ENCODE measurements at regions of chr4 and their contacts with region 1.

Region 1: DNA sequence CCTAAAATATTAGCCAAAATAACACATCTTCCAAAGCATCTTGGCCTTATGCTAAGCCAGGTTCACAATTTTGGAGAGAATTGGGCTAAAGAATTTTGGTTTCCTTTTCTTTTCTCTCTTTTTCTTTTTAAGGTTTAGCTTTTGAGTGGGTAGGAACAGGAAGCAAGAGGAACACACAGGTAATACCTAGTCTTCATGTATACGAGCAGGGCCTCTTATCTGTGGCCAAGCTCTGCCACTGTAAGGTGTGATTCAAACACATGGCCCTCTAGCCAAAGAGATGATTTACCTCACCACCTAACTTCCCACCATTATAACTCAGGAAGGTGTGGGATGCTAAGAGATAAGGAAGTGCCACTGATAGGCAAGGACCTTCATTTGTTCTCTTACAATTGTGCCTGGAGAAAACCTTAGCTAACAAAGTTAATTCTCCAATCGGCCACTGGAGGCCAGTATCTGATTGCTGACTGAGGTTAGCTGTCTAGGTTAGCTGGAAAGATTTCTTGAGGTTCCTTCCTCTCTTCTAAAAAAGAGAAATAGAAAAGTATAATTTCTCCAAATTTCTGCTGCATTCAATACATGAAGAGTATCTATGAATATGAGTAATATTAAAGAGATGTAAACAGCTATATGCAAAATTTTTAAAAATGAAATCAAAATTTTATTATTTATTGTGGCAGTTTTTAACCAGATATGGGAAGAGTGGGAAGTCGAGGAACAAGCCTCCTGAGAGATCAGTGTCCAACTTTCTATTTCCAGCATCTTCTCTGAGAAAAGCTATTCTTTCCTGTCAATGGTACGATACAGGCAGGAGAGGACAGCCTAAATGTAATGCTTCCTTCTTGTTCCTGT is 30.1 kb upstream of the BBS7 start:
- DNase-seq: peak; percentile 55 to 75 (median 59)
- ATAC-seq: peak; percentile 95
- H3K4me3 ChIP-seq: no peak overlapping the region
- H3K27ac ChIP-seq: no peak overlapping the region
- H3K4me1 ChIP-seq: no peaks in the 10 kb centered on the region
- H3K27me3 ChIP-seq: peaks cover 0 to 4% of the 10 kb centered on the region in 2 experiments; a peak in 2 of 5 replicates
- CTCF ChIP-seq: peak; percentile 70 to 90 (median 79)
- EP300 ChIP-seq: no peak
- POLR2A ChIP-seq: no peak
- RAD21 ChIP-seq: peak; percentile 90 to 93

Region 2: DNA sequence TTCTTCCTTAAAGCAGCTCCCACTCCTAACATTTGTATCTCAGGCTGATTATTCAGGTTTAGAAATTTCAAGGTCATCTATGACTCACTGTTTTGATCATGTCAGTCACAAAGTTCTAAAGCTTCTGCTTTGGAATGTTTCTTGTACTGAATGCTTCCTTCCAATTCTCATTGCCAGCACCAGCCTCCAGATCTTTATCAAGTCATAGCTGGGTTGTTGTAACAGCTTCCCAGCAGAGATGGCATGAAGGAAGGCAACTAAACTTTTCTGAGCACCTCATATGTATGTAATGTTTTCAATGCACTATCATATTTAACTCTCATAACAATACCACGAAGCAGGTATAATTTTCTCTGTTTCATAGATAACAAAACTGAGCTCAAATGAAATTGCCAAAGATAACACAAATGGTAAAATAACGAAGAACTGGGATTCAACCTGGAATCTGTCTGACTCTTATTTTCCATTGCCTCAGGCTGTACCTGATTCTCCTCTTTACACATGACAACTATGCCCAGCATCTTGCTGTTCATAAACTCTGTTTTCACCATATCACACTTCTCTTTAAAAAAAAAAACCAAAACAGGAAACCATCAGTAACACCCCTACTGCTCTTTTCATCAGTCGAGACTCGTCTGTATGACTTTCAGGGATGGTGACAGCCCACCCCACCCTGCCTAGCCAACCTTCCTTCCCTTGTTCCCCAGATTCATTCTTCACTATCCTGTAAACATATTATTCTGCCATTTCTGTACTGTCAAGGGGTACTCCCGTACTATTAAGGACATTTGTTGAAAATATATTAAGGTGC is 38.1 kb after region 1 on chr4:
- CTCF ChIA-PET with region 1: no interaction called
- POLR2A ChIA-PET with region 1: no interaction called
- in situ Hi-C with region 1: no loop called
- intact Hi-C with region 1: no loop called
- DNase-seq: no peak
- ATAC-seq: no peak
- H3K4me3 ChIP-seq: no peak overlapping the region
- H3K27ac ChIP-seq: no peak overlapping the region
- H3K4me1 ChIP-seq: no peaks in the 10 kb centered on the region
- H3K27me3 ChIP-seq: peaks cover 7 to 10% of the 10 kb centered on the region in 2 experiments; a peak in 3 of 5 replicates
- CTCF ChIP-seq: no peak
- EP300 ChIP-seq: no peak
- POLR2A ChIP-seq: no peak
- RAD21 ChIP-seq: no peak

Region 3: DNA sequence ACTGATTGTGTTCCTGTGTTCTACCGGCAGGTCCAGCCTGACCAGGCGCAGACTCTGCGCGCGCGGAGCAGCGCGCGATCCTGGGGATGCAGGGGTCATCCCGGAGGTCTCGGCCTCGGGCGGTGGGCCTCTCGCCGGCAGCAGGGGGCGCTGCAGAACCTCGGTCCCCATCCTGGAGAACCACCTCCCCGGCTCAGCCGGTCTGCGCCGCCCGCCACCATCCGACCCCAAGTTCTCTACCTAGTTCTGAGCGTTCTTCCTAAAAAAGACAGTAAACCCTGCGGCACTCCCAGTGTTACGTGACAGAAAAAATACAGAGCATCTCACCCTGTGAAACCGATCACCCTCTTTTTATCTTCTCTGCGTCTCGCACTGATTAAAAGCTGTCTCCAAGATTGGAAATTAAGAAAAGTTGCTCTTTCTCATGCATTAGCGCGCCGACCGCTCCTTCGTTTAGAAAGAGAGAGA is 49.9 kb after region 1 on chr4:
- CTCF ChIA-PET with region 1: no interaction called
- POLR2A ChIA-PET with region 1: no interaction called
- in situ Hi-C with region 1: no loop called
- intact Hi-C with region 1: loop called (anchors 5 kb)
- DNase-seq: peak; percentile 74 to 79 (median 78)
- ATAC-seq: peak; percentile 94
- H3K4me3 ChIP-seq: peak overlapping the region; percentile 41; the same call in 1 of the 2 replicates
- H3K27ac ChIP-seq: no peak overlapping the region
- H3K4me1 ChIP-seq: peaks cover 0 to 20% of the 10 kb centered on the region in 2 experiments; a peak in 2 of 5 replicates
- H3K27me3 ChIP-seq: peaks cover 6 to 24% of the 10 kb centered on the region in 2 experiments; a peak in 4 of 5 replicates
- CTCF ChIP-seq: peak; percentile 68 to 80 (median 79)
- EP300 ChIP-seq: no peak
- POLR2A ChIP-seq: no peak
- RAD21 ChIP-seq: peak; percentile 64 to 78

Region 4: GRCh38 chr4:122003335-122003734 is 103.0 kb after region 1 on chr4:
- CTCF ChIA-PET with region 1: no interaction called
- POLR2A ChIA-PET with region 1: no interaction called
- in situ Hi-C with region 1: no loop called
- intact Hi-C with region 1: loop called (anchors 1 kb)
- DNase-seq: peak; percentile 78 to 84 (median 82)
- ATAC-seq: peak; percentile 96
- H3K4me3 ChIP-seq: no peak overlapping the region
- H3K27ac ChIP-seq: no peak overlapping the region
- H3K4me1 ChIP-seq: no peaks in the 10 kb centered on the region
- H3K27me3 ChIP-seq: no peaks in the 10 kb centered on the region; a peak in 1 of 5 replicates
- CTCF ChIP-seq: peak; percentile 75 to 84 (median 81)
- EP300 ChIP-seq: no peak
- POLR2A ChIP-seq: no peak
- RAD21 ChIP-seq: peak; percentile 64 to 84

Region 5: GRCh38 chr4:122224348-122224747 is 324.0 kb after region 1 on chr4:
- CTCF ChIA-PET with region 1: interaction called, 3 read pairs
- POLR2A ChIA-PET with region 1: no interaction called
- in situ Hi-C with region 1: no loop called
- intact Hi-C with region 1: loop called (anchors 1 kb)
- DNase-seq: peak; percentile 8 to 31 (median 10)
- ATAC-seq: peak; percentile 75; the same call in 2 of the 3 replicates
- H3K4me3 ChIP-seq: no peak overlapping the region
- H3K27ac ChIP-seq: no peak overlapping the region
- H3K4me1 ChIP-seq: no peaks in the 10 kb centered on the region
- H3K27me3 ChIP-seq: no peaks in the 10 kb centered on the region
- CTCF ChIP-seq: peak; percentile 37 to 47 (median 46); a peak in 5 of 6 replicates
- EP300 ChIP-seq: no peak
- POLR2A ChIP-seq: no peak
- RAD21 ChIP-seq: peak in 1 of 2 experiments; percentile 29; a peak in 2 of 4 replicates

Region 6: DNA sequence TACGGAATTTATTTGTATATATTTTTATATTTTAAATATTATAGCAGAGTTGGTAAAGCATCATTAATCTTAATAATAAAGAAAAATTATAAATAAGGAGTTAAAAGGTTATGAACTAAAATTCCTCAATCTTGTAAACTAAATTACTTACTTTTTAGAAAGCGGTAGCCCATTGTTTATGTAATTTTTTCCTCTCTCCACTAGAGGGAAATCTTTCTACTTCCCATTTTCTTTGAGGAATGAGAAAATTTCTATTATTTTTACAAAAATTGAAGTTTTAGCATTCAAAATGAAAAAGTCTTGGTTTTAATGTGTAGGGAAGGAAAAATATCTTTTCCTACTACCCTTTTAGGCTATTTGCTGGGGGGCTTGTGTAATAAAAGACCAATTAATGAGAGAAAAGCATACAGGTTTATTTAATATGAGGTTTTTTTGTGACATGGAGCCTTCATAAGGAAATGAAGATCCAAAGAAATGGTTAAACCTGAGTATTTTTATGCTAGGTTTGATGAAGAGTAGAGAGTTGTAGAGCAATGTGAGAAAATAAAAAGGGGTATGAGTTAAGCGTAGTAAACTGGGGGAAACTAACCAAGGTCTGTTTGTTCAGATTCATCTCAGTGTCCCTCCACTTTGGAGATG is 409.7 kb after region 1 on chr4:
- CTCF ChIA-PET with region 1: no interaction called
- POLR2A ChIA-PET with region 1: no interaction called
- in situ Hi-C with region 1: no loop called
- intact Hi-C with region 1: loop called (anchors 2 kb)
- DNase-seq: peak; percentile 3 to 12 (median 12)
- ATAC-seq: no peak
- H3K4me3 ChIP-seq: no peak overlapping the region
- H3K27ac ChIP-seq: no peak overlapping the region
- H3K4me1 ChIP-seq: no peaks in the 10 kb centered on the region; a peak in 1 of 5 replicates
- H3K27me3 ChIP-seq: no peaks in the 10 kb centered on the region
- CTCF ChIP-seq: peak in 2 of 3 experiments; percentile 33 to 72; a peak in 3 of 6 replicates
- EP300 ChIP-seq: no peak
- POLR2A ChIP-seq: no peak
- RAD21 ChIP-seq: peak; percentile 51 to 60

Region 7: DNA sequence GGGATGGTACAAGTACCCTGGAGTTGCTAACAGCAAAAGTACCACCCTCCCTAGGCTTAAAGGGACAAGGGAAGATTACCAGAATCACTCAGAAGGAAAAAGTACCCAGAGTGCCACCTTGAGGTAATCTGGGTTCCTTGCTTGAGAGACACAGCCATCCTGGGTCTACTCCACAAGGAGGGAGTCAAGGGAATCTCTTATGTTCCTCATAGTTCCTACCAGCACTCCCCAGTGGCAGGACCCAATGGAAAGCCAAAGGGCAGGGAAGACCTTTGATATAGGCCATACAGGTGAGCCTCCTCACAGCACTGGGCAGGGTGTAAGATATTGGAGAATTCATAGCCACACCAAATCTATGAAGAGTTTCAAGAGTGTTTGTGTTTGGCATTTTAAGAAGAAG is 550.5 kb after region 1 on chr4:
- CTCF ChIA-PET with region 1: no interaction called
- POLR2A ChIA-PET with region 1: no interaction called
- in situ Hi-C with region 1: no loop called
- intact Hi-C with region 1: loop called (anchors 2 kb)
- DNase-seq: peak in 2 of 4 experiments; percentile 12 to 34
- ATAC-seq: peak; percentile 88
- H3K4me3 ChIP-seq: no peak overlapping the region
- H3K27ac ChIP-seq: no peak overlapping the region
- H3K4me1 ChIP-seq: no peaks in the 10 kb centered on the region
- H3K27me3 ChIP-seq: no peaks in the 10 kb centered on the region
- CTCF ChIP-seq: peak; percentile 42 to 69 (median 61); a peak in 4 of 6 replicates
- EP300 ChIP-seq: no peak
- POLR2A ChIP-seq: no peak
- RAD21 ChIP-seq: peak in 1 of 2 experiments; percentile 48; a peak in 2 of 4 replicates

Region 8: DNA sequence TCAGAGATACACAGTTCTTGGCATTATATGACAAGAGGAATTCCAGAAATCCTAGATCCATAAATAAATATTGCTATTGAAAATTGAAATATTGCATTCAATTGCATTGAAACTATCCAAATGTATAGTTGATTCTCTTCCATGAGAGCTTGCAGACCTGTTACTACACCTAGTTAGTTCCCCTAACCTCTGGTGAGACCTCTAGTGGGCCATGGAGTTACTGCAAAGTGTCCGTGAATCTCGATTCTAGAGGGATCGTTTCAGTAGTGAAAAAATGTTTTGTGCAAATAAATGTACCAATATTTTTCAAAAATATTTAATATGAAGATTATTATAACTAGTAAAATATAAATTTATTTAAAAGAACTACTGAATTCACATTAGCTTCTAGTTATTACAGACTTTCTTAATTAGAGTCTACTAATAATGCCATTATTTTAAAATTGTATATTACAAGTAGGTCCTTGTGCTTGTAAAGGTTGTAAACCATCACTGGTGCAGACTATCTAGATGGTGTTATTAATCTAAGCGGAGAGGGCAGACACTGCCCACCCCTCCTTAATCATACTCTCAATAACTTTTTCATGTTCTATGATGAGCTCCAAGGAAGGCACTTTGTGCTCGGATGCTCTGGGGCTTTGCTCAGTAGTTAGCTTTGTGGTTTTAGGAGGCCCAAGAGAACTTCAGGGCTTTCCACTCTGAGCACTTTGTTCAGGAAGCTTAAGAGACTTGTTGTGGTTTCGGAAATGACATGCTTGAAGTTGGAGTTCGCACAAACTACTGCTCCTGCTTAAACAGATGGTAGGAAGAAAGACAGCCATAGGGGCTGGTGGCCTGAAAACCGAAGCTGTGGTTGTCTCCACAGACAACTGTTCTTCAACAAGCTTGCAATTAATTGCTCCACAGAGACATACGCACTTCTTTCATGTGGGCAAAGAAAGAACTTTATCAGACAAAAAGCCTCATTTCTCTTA is 677.7 kb after region 1 on chr4:
- CTCF ChIA-PET with region 1: interaction called, 22 read pairs
- POLR2A ChIA-PET with region 1: no interaction called
- in situ Hi-C with region 1: loop called (anchors 10 kb)
- intact Hi-C with region 1: loop called (anchors 1 kb)
- DNase-seq: peak; percentile 63 to 70 (median 67)
- ATAC-seq: peak; percentile 95
- H3K4me3 ChIP-seq: no peak overlapping the region
- H3K27ac ChIP-seq: no peak overlapping the region
- H3K4me1 ChIP-seq: no peaks in the 10 kb centered on the region
- H3K27me3 ChIP-seq: no peaks in the 10 kb centered on the region
- CTCF ChIP-seq: peak; percentile 75 to 78 (median 77)
- EP300 ChIP-seq: no peak
- POLR2A ChIP-seq: no peak
- RAD21 ChIP-seq: peak; percentile 53 to 73; a peak in 3 of 4 replicates

Measured in K562 (cell line).